HEK293 (cell line): ENCODE measurements at regions of chr14 and their contacts with region 1.

Region 1: GRCh38 chr14:69586404-69586803 is 11.7 kb upstream of the CCDC177 start:
- H3K4me3 ChIP-seq: no peak overlapping the region
- H3K27ac ChIP-seq: no peak overlapping the region
- H3K4me1 ChIP-seq: no peaks in the 10 kb centered on the region
- CTCF ChIP-seq: no peak

Region 2: DNA sequence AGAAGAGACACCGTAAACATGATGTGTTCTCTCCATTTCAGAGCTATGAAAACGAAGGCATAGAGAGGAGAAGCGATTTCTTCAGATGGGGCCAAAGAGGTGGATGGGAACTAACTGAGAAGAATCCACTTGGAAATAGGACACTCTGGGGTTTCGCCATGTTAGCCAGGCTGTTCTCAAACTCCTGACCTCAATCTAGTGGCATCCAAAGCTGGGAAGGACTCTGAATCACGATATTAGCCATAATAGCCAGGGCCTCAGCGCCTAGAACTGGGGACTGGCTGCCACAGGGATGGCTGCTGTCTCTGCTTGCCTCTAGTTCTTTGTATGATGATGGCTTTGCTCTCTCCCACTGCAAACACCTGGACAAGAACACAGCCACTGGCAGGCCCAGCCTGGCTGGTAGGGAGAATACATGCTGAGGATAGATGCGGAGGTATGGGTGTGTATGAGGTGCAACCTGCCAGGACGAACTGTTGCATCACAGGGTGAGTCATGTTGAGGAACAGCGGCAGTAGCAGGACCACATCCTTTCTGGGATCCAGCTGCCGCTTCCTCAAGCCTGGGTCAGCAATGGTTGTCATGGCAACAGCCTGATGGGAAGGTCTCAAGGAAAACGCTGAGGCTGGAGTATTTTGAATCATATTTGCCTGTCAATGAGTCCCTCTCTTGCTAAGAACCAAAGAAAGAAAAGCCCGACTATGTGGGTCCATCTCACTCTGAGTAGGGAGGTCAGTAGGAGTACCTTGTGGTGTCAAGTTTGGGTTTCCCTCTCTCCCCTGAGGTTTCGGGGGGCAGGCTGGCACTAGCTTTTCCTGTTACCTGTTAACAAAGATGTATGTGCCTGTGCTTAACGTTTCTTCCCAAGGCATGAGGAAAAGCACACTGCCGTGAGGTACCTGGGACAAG is 42.8 kb before region 1 on chr14:
- CTCF ChIA-PET with region 1: interaction called, 10 read pairs
- POLR2A ChIA-PET with region 1: no interaction called
- H3K4me3 ChIP-seq: no peak overlapping the region
- H3K27ac ChIP-seq: no peak overlapping the region
- H3K4me1 ChIP-seq: no peaks in the 10 kb centered on the region
- CTCF ChIP-seq: no peak

Region 3: DNA sequence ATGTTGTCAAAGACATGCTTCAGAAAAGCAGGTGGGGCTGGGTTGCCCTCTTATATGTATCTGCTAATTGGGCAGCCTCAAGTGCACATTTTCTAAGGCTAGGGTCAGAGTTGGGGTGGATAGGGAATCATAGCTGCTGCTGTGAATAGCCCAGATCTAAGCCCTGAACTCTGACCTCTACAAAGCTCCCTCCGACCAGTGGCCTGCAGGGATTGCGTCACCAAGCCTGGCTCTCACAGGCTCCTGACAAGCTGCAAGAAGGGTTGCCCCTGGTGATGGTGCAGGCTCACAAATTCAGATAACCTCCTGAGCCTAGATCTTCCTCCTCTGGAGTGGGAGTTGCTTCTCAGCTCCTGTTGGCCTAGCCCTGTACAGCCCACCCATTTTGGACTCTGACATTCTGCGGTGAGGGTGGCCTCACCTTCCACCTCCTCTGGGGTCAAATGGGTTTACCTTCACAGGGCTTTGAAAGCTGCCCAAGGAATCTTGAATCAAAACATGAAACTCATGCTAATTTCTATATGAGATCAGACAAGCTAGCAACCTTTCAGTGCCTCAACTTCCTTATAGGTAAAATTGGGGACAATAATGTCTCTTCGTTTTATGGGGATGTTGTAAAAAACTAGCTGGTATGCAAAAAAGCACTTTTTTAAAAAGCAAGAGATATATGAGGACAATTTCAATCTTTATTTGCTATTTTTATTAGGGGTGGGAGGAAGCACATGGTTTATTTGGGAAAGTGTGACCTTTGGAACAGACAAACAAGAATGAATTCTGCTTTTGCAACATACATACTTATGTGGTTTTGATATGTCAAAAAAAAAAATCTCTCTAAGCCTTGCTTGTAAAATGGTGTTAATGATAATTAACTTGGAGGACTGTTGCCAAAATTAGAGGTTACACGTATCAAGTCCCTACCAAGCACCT is 20.1 kb after region 1 on chr14:
- CTCF ChIA-PET with region 1: interaction called, 16 read pairs
- POLR2A ChIA-PET with region 1: no interaction called
- H3K4me3 ChIP-seq: no peak overlapping the region
- H3K27ac ChIP-seq: no peak overlapping the region
- H3K4me1 ChIP-seq: no peaks in the 10 kb centered on the region
- CTCF ChIP-seq: no peak

Region 4: GRCh38 chr14:69698572-69698971 is 112.2 kb after region 1 on chr14:
- CTCF ChIA-PET with region 1: no interaction called
- POLR2A ChIA-PET with region 1: no interaction called
- H3K4me3 ChIP-seq: no peak overlapping the region
- H3K27ac ChIP-seq: no peak overlapping the region
- H3K4me1 ChIP-seq: peaks cover 12% of the 10 kb centered on the region; the same call in 1 of the 2 replicates
- CTCF ChIP-seq: no peak